K562 (cell line): ENCODE measurements at regions of chr1 and their contacts with region 1.

Region 1: DNA sequence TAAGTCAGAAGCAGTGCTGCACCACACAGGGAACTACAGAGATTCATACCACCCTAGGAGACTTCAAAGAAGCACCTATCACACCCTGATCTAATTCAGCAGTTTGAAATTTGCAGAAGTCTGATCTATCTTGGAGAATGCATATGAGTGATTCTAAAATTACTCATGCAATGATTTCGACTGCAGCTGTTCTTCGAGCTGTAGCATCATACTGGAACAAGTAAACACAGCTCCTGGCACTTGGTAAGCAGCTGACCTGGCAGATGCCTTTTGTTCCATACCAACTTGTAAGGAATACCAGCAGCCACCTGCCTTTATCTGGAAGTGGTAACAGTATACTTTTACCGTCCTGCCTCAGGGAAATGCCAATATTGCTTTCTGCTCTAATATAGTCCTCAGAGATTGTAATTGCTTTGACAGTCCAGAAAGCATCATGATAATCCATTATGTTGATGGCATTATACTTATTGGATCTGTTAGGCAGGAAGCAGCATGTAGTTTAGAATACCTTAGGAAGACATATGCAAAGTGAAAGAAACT is 25.7 kb downstream of the AADACL4 start:
- DNase-seq: no peak
- ATAC-seq: no peak
- H3K4me3 ChIP-seq: no peak overlapping the region
- H3K27ac ChIP-seq: no peak overlapping the region
- H3K4me1 ChIP-seq: no peaks in the 10 kb centered on the region
- H3K27me3 ChIP-seq: peaks cover 7% of the 10 kb centered on the region in 2 experiments; a peak in 3 of 5 replicates
- CTCF ChIP-seq: no peak
- EP300 ChIP-seq: no peak
- POLR2A ChIP-seq: no peak
- RAD21 ChIP-seq: no peak

Region 2: GRCh38 chr1:12359359-12360133 is 310.1 kb before region 1 on chr1:
- CTCF ChIA-PET with region 1: no interaction called
- POLR2A ChIA-PET with region 1: no interaction called
- in situ Hi-C with region 1: no loop called
- intact Hi-C with region 1: no loop called
- DNase-seq: no peak
- ATAC-seq: no peak; the same call in 2 of the 3 replicates
- H3K4me3 ChIP-seq: no peak overlapping the region
- H3K27ac ChIP-seq: no peak overlapping the region
- H3K4me1 ChIP-seq: no peaks in the 10 kb centered on the region
- H3K27me3 ChIP-seq: no peaks in the 10 kb centered on the region
- CTCF ChIP-seq: no peak
- EP300 ChIP-seq: no peak
- POLR2A ChIP-seq: no peak
- RAD21 ChIP-seq: no peak

Region 3: DNA sequence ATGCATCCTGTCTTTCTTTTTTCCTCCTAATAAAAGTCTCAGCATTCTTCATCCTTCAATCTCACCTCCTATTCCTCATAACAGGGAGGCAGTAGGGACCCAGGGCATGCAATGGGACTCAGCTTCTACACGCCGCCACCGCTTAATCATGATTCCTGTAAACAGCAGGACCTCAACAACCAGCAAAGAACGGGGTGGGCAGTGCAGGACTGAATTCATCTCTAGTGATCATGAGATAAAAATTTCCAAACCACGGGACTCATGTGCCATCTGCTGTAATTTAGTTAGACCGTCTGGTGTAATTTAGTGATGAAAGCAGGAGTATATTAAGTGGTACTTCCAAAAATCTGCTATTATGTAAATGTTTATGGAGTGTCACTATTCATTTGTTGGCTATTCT is 109.3 kb after region 1 on chr1:
- CTCF ChIA-PET with region 1: no interaction called
- POLR2A ChIA-PET with region 1: no interaction called
- in situ Hi-C with region 1: no loop called
- intact Hi-C with region 1: loop called (anchors 10 kb)
- DNase-seq: no peak
- ATAC-seq: no peak
- H3K4me3 ChIP-seq: no peak overlapping the region
- H3K27ac ChIP-seq: no peak overlapping the region
- H3K4me1 ChIP-seq: no peaks in the 10 kb centered on the region
- H3K27me3 ChIP-seq: peaks cover 15 to 42% of the 10 kb centered on the region in 2 experiments; a peak in 4 of 5 replicates
- CTCF ChIP-seq: peak in 1 of 3 experiments; percentile 12; a peak in 1 of 6 replicates
- EP300 ChIP-seq: no peak
- POLR2A ChIP-seq: no peak
- RAD21 ChIP-seq: peak; percentile 6 to 18; a peak in 1 of 4 replicates